Colonic mucosa (tissue), 4 donors: ENCODE measurements at regions of chr1 and their contacts with region 1.

Region 1: DNA sequence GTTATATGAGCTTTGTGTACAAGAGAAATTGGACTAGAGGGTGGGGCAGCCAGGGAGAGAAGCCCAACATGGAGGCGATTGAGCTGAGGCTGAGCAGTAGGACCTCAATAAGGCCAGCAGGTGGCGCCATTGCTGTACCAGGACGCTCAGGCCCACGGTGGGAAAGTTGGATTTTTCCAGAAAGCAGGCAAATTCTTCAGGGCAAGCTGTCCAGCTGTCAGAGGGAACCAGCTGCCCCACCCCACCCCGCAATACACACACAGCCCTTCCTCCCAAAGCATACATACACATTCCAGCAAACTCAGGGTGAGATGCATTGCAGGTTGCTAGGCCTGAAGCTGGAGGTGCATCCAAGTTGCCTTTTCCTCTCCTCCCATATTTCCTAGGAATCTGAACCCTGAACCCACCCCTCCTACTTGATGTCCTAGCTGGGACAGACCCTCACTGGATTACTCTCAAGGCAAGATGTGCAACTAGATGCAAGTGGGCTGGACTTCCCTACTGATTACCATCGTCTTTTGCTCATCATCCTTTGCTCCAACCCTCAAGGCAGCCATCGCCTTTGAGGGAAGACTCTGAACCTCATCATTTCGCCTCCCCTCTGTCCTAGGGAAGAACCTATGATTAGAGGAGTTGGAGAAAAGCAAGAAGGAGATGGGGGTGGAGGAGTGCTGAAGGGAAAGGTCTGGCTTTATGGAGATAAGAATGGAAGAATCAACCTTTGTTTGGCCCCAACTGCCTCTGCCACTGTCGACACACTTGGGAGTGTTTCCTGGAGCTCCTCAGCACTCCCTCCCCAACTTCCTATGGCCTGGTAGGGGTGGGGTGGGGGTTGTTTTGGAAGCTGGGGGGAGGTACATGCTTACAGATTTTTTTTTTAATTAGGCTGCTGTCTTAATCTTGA is 25.5 kb downstream of the CD34 start:
- DNase-seq: peak; percentile 86
- H3K4me3 ChIP-seq: no peak overlapping the region
- H3K27ac ChIP-seq: no peak overlapping the region
- H3K4me1 ChIP-seq: no peaks in the 10 kb centered on the region
- H3K27me3 ChIP-seq: no peaks in the 10 kb centered on the region
- CTCF ChIP-seq: peak; percentile 94

Region 2: DNA sequence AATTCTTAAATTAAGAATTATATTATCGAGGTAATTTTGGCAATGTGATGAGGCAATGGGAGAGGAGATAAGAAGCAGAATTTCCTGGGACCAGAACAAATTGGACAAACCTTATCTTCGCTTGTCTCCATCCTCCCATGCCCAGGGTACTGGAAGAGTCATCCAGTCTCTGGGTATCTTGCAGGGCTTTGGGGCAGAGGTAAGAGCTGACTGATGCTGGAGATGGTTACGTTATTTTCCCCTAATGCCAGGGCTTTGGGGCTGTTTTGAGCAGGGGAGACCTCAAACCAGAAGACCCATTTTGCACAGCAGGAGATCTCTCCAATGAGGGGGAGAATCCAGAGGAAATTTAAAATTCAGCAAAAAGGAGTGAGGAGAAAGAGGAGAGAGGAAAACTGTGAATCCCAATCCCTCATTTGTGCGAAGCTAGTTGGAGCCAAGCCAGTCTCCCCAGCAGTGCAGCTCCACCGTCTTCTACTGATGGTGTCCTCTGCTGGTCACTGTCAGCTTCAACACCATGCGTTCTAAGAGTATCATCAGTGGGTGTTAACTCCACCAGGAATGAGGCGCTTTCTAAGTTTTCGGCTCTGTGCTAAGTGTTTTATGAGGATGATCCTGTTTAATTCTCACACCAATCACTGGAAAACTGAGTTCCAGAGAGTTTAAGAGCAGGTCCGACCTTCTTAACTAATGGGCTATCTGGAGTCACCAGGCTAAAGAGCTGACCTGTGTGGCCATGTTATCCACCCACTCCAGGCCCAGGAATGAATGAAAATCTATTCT is 112.3 kb after region 1 on chr1:
- intact Hi-C with region 1: loop called (anchors 10 kb)
- DNase-seq: peak; percentile 78
- H3K4me3 ChIP-seq: no peak overlapping the region
- H3K27ac ChIP-seq: no peak overlapping the region
- H3K4me1 ChIP-seq: no peaks in the 10 kb centered on the region
- H3K27me3 ChIP-seq: no peaks in the 10 kb centered on the region
- CTCF ChIP-seq: peak; percentile 77